WTC11 (cell line): ENCODE measurements at regions of chr11 and their contacts with region 1.

Region 1: GRCh38 chr11:73177778-73178577 is 35.9 kb upstream of the FCHSD2 start:
- DNase-seq: peak; percentile 83
- ATAC-seq: peak; percentile 97
- H3K4me3 Mint-ChIP-seq: no peak overlapping the region
- H3K27ac Mint-ChIP-seq: no peak overlapping the region
- H3K4me1 Mint-ChIP-seq: no peaks in the 10 kb centered on the region
- H3K27me3 Mint-ChIP-seq: no peaks in the 10 kb centered on the region; the same call in 1 of the 2 replicates
- CTCF ChIP-seq: peak; percentile 66

Region 2: DNA sequence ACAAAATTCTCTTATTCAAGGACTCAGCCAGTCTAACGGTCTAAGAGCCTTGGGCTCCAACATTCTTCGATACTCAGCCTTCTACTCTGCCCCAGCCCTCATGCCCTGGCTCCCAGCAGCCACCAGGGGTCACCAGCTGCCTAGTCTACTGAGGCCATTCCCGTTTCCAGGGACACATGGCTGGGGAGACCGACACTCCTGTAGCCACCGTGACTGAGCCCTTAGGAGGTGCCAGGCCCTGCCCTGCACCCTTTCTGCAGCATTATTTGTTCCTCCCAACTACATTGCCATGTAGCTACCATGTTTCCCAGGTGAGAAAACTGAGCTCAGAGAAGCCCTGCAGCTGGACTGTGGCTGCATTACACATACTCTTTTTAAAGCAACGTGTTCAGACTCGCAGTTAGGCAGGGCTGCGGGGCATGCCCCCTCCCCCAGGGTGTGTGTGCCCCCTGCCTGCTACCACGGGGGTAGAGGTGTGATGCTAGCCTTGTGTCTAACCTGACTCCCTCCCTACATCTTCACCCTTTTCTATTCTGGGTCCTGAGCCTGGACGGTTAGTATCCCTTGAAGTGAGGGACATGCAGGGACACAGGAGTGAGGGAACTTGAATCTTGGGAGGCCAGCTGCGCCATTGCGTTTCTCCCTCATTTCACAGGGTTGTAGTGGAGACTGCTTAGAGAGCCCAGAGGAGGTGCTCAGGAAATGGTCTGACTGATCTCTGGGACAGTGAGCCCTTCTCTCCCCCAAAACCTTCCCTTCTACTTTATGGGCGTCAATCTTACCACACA is 346.3 kb before region 1 on chr11:
- CTCF ChIA-PET with region 1: interaction called, 83 read pairs
- POLR2A ChIA-PET with region 1: no interaction called
- DNase-seq: peak; percentile 90
- ATAC-seq: peak; percentile 97
- H3K4me3 Mint-ChIP-seq: no peak overlapping the region
- H3K27ac Mint-ChIP-seq: no peak overlapping the region
- H3K4me1 Mint-ChIP-seq: peaks cover 9% of the 10 kb centered on the region
- H3K27me3 Mint-ChIP-seq: peaks cover 6% of the 10 kb centered on the region
- CTCF ChIP-seq: peak; percentile 59

Region 3: DNA sequence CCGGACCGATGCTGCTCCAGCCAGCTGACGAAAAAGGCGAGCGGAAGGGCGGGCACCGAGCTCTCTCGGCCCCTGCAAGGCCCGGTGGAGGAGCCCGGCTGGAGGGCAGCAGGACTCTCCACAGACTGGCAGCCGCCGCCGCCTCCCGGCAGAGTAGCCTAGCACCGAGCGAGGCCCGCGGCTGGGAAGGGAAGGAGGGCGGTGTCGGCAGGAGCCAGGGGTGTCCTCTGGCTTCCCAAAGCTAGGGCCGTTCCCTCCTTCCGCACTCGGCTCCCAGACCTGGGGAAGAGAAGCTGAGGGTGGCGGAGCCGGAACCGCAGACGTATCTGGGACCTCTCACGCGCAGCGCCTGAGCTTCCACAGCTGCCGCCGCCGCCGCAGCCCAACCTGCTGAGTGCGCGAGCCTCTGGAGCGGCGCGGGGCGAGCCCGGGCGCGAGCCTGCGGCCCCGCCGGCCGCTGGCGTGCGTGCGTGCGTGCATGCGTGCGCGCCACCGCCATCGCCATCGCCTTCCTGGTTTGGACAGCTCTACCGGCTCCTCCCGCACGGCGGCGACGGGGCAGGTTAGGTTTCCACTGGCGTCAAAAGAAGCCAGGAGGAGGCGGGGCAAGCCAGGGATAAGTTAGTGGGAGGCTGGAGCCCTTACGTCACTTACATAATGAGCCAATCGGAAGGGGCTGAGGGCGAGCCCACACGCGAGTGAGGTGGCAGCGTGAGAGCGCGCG is 582.9 kb after region 1 on chr11 and contains the start of gene RAB6A:
- CTCF ChIA-PET with region 1: no interaction called
- POLR2A ChIA-PET with region 1: no interaction called
- DNase-seq: peak; percentile 99
- ATAC-seq: peak; percentile 92
- H3K4me3 Mint-ChIP-seq: peak within 1 kb of the TSS; percentile 95
- H3K27ac Mint-ChIP-seq: peak within 1 kb of the TSS; percentile 94
- H3K4me1 Mint-ChIP-seq: peaks cover 28% of the 10 kb centered on the region
- H3K27me3 Mint-ChIP-seq: no peaks in the 10 kb centered on the region
- CTCF ChIP-seq: no peak
- total RNA-seq, gene RAB6A: 103 to 114 TPM (median 107 TPM) in 3 replicates